ENCODE measurements at regions of chr6 and their contacts with region 1.

Region 1: DNA sequence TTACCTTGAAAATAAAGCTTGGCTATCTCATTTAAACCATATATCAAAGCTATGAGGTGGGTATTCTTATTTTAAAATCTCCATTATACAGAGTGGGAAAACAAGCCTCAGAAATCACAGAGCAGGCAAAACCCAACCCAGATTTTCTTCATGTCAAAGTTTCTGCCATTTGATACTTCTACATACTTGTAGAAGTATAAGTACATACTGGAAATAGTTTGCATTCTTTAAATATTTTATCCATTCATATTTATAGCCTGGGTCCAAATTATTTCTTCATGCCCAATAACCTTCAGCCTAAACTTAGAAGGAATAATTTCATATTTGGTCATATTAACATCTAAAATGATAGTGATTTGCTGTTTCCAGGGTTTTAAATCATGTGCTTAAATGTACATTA is 61.8 kb downstream of the MLIP start:
- DNase-seq: no peak
- H3K4me3 Mint-ChIP-seq: no peak overlapping the region
- H3K27ac Mint-ChIP-seq: no peak overlapping the region
- H3K4me1 Mint-ChIP-seq: no peaks in the 10 kb centered on the region
- H3K27me3 Mint-ChIP-seq: no peaks in the 10 kb centered on the region

Region 2: GRCh38 chr6:54156650-54157250 is 16.3 kb before region 1 on chr6:
- intact Hi-C with region 1: loop called (anchors 1 kb)
- DNase-seq: no peak
- H3K4me3 Mint-ChIP-seq: no peak overlapping the region
- H3K27ac Mint-ChIP-seq: no peak overlapping the region
- H3K4me1 Mint-ChIP-seq: no peaks in the 10 kb centered on the region
- H3K27me3 Mint-ChIP-seq: no peaks in the 10 kb centered on the region

Region 3: DNA sequence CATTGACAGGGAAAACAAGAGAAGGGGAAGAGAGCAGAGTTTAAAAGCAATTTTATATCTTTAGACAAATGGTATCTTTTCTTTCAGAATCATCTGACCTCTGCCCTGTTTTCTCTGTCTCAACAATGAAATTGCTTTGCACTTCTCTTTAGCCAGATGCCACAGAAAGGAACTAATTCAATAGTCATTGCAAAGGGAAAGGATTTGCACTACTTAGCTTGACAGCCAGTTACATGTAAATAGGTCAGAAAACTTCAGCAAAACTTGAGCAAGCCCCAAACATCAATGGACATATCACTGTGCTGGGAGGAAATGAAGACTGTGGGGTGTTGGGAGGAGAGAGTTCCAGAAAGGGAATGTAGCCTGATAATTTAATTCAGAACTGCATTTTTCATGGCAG is 492.2 kb after region 1 on chr6:
- intact Hi-C with region 1: no loop called
- DNase-seq: no peak
- H3K4me3 Mint-ChIP-seq: no peak overlapping the region
- H3K27ac Mint-ChIP-seq: no peak overlapping the region
- H3K4me1 Mint-ChIP-seq: no peaks in the 10 kb centered on the region
- H3K27me3 Mint-ChIP-seq: no peaks in the 10 kb centered on the region

Measured in activated T-helper 2 cell treated with anti-CD3 and anti-CD28 coated beads, Interferon-gamma antibody, Interleukin-2, Interleukin-4, amounts not matched to agents 10 μg/mL and 5 μg/mL and 100 μg/mL, durations not matched to agents 14 hours and 24 hours and 36 hours (primary cell).